Activated CD4-positive, alpha-beta T cell treated with anti-CD3 and anti-CD28 coated beads, Interleukin-2, amount 10 ng/mL, durations not matched to agents 24 days and 14 days (primary cell): ENCODE measurements at regions of chr10 and their contacts with region 1.

Region 1: DNA sequence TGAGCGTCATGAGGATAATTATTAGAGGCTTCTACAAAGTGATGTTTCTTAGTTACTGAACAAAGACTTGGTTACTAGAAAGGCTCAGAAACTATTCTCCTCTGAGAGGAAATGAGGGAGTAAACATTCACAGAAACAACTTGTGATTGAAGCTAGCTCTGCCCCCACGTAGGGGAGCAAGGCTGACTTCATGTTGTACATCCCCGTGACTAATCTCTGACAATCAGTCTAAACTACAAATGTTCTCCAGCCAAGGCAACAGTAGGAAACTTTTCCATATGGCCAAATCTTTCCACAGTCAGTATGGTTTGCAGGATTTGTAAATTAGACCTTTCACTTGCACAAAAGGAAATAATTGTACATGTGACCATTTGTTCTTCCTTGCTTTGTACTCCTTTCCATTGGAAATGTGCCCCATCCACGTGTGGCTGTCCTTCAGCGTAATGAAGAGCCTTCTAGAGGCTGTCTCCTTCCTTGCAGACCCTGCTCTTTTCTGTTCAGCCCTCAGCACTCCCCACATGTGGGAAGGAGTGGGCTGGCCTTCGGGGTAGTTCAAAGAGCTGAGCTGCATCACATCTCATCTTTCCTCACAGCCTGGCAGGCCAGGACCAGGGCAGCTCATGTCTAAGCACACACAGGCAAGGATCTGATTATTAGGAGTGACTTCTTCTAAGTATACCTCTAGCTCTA is 93.5 kb downstream of the PCGF5 start:
- DNase-seq: no peak
- H3K4me3 Mint-ChIP-seq: peak overlapping the region; percentile 28
- H3K27ac Mint-ChIP-seq: peak overlapping the region; percentile 81
- H3K4me1 Mint-ChIP-seq: peaks cover 3% of the 10 kb centered on the region
- H3K27me3 Mint-ChIP-seq: peaks cover 8% of the 10 kb centered on the region

Region 2: GRCh38 chr10:91350651-91351081 is 36.7 kb after region 1 on chr10:
- intact Hi-C with region 1: loop called (anchors 5 kb)
- DNase-seq: no peak
- H3K4me3 Mint-ChIP-seq: no peak overlapping the region
- H3K27ac Mint-ChIP-seq: no peak overlapping the region
- H3K4me1 Mint-ChIP-seq: peaks cover 3% of the 10 kb centered on the region
- H3K27me3 Mint-ChIP-seq: peaks cover 2% of the 10 kb centered on the region